A549 (cell line): ENCODE measurements at regions of chr11 and their contacts with region 1.

Region 1: DNA sequence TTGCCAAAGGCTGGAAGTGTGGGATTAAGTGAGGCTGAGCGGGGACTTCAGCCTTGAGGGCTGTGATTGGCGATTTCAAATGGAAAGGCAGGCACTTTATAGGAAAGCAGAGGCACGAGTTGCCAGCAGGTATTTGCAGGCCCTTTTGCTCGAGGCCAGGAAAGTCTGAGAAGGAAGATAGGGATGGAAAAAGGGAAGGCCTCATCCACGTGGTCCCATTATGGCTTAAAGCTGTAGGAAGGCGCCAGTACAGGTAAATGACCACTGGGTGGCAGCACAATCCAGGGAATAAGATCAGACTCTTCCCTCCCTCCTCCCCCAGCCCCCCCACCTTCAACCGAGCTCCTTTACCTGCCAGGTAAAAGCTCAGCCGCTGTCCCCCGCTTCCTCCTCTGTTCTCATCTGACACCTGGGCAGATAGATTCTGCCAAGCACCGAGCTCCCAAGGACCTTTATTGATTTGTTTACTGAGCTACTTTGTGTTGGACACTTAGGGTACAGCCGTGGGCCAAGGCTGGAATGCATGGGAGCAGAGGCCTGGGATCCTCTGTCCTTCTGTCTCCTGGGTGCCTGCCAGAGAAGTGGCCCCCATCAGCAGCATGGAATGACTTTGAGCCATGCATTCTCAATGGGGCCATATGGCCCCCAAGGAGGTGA is 7.5 kb downstream of the P2RX3 start:
- DNase-seq: peak; percentile 81 to 84
- ATAC-seq: peak; percentile 66 to 78
- H3K4me3 ChIP-seq: no peak overlapping the region
- H3K27ac ChIP-seq: peak overlapping the region; percentile 50 to 75; a peak in 5 of 6 replicates
- H3K4me1 ChIP-seq: peaks cover 18% of the 10 kb centered on the region
- CTCF ChIP-seq: peak; percentile 91
- EP300 ChIP-seq: no peak
- POLR2A ChIP-seq: no peak
- RAD21 ChIP-seq: peak; percentile 82 to 97

Region 2: GRCh38 chr11:57047610-57048009 is 298.1 kb before region 1 on chr11:
- CTCF ChIA-PET with region 1: no interaction called
- POLR2A ChIA-PET with region 1: no interaction called
- DNase-seq: peak in 1 of 2 experiments; percentile 10
- ATAC-seq: no peak
- H3K4me3 ChIP-seq: no peak overlapping the region
- H3K27ac ChIP-seq: 0 out of 6 replicates have a peak overlapping the region, but pooled peaks of 1 of the 2 experiments have one; percentile 16
- H3K4me1 ChIP-seq: peaks cover 6% of the 10 kb centered on the region; the same call in 1 of the 3 replicates
- CTCF ChIP-seq: no peak
- EP300 ChIP-seq: no peak
- POLR2A ChIP-seq: no peak
- RAD21 ChIP-seq: no peak

Region 3: DNA sequence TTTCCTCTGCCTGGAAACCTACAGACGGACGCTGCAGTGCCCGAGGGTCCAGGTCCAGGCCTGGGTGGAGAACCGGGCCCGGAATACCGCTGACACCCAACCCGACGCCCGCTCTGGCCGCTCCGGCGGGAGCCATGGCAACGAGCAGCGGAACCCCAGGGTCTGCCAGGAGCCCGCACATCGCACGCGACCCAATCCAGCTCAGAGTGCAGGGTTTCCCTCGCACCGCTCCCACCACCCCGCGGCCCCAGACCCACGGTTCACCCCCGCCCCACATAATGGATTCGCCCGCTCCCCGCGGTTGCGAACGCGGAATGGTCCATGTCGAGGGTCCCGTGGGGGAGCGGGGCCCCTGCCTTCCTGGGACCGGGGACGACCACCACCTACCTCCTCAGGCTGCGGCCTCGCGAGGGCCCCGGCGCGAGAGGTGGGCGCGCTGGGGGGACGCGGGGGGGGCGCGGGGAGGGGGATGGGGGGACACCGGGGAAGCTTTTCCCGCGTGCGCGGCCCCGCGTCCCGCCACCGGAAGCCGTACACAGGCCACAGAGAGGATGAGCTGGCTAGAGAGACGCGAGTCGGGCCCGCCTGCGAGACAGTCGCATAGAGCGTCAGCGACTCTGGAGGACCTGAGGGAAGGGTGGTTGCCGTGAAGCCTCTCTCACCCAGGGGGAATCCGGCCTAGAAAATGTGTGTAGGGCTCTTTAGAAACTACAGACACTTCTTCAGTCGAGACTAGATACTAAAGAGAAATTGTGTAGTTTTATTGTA is 10.2 kb before region 1 on chr11 and contains the start of gene SSRP1:
- CTCF ChIA-PET with region 1: interaction called, 10 read pairs
- POLR2A ChIA-PET with region 1: interaction called, 5 read pairs
- DNase-seq: peak; percentile 91 to 92
- ATAC-seq: peak; percentile 94 to 99
- H3K4me3 ChIP-seq: peak within 1 kb of the TSS; percentile 81
- H3K27ac ChIP-seq: peak within 1 kb of the TSS; percentile 95 to 99
- H3K4me1 ChIP-seq: peaks cover 18% of the 10 kb centered on the region
- CTCF ChIP-seq: no peak; the same call in 2 of the 3 replicates
- EP300 ChIP-seq: no peak
- POLR2A ChIP-seq: peak; percentile 56
- RAD21 ChIP-seq: no peak
- polyA plus RNA-seq, gene SSRP1: 282 and 288 TPM in 2 replicates

Region 4: GRCh38 chr11:57358543-57358961 is 12.9 kb after region 1 on chr11:
- CTCF ChIA-PET with region 1: interaction called, 26 read pairs
- POLR2A ChIA-PET with region 1: no interaction called
- DNase-seq: peak in 1 of 2 experiments; percentile 84
- ATAC-seq: peak; percentile 52 to 71
- H3K4me3 ChIP-seq: no peak overlapping the region
- H3K27ac ChIP-seq: peak overlapping the region; percentile 84 to 88
- H3K4me1 ChIP-seq: peaks cover 38% of the 10 kb centered on the region
- CTCF ChIP-seq: no peak; the same call in 1 of the 3 replicates
- EP300 ChIP-seq: peak; percentile 40 to 51; a peak in 2 of 5 replicates
- POLR2A ChIP-seq: no peak
- RAD21 ChIP-seq: no peak

Region 5: DNA sequence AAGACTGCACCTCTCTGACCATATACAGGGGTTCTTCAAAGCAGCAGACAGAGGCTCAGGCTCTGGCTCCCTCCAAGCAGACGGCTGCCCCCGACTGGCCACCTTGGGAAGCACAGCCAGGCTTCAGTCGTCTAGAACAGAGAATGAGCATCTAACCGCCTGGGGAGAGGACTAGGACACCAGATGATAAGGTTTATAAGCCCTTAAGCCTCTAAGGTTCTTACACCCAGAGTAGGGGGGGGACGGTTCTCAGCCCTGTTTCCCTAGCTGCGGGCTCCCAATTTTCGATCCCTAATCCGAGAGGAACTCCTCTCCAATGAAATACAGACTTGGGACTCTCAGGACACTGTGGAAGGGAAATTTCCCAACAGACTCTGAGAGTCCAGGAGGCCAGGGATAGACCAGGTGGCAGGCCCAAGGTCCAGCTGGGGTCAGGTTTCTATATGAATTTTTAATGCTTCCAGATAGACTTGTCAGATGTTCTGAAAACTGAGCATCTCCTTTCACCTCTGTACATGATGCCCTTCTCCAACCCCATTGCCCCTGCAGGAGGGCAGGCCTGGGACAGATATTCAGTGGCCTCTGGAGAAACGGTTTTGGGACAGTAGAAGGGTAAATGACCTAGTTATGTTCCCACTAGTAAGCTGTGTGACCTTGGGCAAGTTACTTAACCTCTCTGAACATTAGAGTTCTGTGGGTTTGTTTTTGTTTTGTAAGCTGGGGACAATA is 134.9 kb after region 1 on chr11:
- CTCF ChIA-PET with region 1: interaction called, 139 read pairs
- POLR2A ChIA-PET with region 1: no interaction called
- DNase-seq: peak; percentile 77 to 91
- ATAC-seq: peak; percentile 72 to 76
- H3K4me3 ChIP-seq: no peak overlapping the region
- H3K27ac ChIP-seq: peak overlapping the region in 1 of 2 experiments; percentile 45; a peak in 2 of 6 replicates
- H3K4me1 ChIP-seq: peaks cover 50% of the 10 kb centered on the region
- CTCF ChIP-seq: peak; percentile 73
- EP300 ChIP-seq: no peak
- POLR2A ChIP-seq: no peak
- RAD21 ChIP-seq: peak; percentile 60 to 69